Activated CD4-positive, alpha-beta memory T cell treated with anti-CD3 and anti-CD28 coated beads for 36 hours (primary cell): ENCODE measurements at regions of chr14 and their contacts with region 1.

Region 1: DNA sequence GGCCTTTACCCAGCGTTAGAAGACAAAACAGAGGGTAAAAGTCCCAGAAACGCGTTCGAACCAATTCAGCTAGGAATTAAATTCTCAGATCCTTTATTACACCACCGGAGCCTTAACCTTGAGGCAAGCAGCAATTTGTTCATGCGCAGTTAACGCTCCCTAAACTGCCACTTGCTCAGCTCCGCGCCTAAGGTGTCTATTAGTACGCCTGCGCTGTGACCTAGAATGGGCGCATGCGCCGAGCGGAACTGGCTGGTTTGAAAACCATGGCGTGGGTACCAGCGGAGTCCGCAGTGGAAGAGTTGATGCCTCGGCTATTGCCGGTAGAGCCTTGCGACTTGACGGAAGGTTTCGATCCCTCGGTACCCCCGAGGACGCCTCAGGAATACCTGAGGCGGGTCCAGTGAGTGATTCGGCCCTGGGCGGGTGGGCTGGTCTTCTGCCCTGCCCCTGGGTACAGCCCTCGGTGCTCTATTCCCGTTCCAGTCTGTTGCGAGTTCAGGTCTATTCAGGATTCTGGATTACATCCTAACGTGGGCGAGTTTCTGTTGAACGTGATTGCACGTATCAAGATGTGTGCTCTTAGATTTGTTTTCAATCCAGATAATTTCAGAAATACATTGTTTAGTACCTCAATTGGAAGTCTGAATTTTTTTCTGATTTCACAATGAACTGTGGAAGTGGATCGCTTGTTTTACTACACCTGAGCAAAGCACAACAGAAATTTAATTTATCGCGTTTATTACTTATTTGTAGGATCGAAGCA is at the start of gene GEMIN2:
- DNase-seq: peak; percentile 97
- H3K4me3 Mint-ChIP-seq: peak within 1 kb of the TSS; percentile 97
- H3K27ac Mint-ChIP-seq: peak within 1 kb of the TSS; percentile 93
- H3K4me1 Mint-ChIP-seq: peaks cover 18% of the 10 kb centered on the region
- H3K27me3 Mint-ChIP-seq: no peaks in the 10 kb centered on the region
- total RNA-seq, gene GEMIN2: 17.2 to 18.8 TPM

Region 2: GRCh38 chr14:38958594-38958993 is 155.7 kb before region 1 on chr14:
- CTCF ChIA-PET with region 1: no interaction called
- POLR2A ChIA-PET with region 1: no interaction called
- intact Hi-C with region 1: no loop called
- DNase-seq: no peak
- H3K4me3 Mint-ChIP-seq: no peak overlapping the region
- H3K27ac Mint-ChIP-seq: no peak overlapping the region
- H3K4me1 Mint-ChIP-seq: no peaks in the 10 kb centered on the region
- H3K27me3 Mint-ChIP-seq: peaks cover 2% of the 10 kb centered on the region

Region 3: DNA sequence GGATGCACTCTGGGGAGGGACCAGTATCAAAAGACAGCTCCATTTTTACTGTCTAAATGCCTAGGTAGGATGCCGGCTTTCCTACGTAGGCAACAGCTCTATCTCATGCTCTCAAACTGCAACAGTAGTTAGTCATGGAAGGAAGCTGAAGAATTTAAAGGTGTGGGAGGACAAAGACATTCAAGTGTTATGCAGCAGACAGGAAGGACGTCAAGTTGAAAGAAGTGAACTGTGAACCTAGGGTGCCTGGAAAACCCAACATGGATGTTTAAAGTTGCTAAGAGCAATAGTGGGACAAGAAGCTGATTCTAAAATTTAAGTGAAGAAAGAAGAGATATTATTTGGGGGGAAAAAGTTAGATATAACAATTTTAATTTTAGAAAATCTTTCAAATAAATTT is 17.1 kb before region 1 on chr14:
- CTCF ChIA-PET with region 1: interaction called, 12 read pairs
- POLR2A ChIA-PET with region 1: interaction called, 38 read pairs
- intact Hi-C with region 1: loop called (anchors 2 kb)
- DNase-seq: peak; percentile 38
- H3K4me3 Mint-ChIP-seq: no peak overlapping the region
- H3K27ac Mint-ChIP-seq: peak overlapping the region; percentile 69
- H3K4me1 Mint-ChIP-seq: peaks cover 41% of the 10 kb centered on the region
- H3K27me3 Mint-ChIP-seq: no peaks in the 10 kb centered on the region

Region 4: DNA sequence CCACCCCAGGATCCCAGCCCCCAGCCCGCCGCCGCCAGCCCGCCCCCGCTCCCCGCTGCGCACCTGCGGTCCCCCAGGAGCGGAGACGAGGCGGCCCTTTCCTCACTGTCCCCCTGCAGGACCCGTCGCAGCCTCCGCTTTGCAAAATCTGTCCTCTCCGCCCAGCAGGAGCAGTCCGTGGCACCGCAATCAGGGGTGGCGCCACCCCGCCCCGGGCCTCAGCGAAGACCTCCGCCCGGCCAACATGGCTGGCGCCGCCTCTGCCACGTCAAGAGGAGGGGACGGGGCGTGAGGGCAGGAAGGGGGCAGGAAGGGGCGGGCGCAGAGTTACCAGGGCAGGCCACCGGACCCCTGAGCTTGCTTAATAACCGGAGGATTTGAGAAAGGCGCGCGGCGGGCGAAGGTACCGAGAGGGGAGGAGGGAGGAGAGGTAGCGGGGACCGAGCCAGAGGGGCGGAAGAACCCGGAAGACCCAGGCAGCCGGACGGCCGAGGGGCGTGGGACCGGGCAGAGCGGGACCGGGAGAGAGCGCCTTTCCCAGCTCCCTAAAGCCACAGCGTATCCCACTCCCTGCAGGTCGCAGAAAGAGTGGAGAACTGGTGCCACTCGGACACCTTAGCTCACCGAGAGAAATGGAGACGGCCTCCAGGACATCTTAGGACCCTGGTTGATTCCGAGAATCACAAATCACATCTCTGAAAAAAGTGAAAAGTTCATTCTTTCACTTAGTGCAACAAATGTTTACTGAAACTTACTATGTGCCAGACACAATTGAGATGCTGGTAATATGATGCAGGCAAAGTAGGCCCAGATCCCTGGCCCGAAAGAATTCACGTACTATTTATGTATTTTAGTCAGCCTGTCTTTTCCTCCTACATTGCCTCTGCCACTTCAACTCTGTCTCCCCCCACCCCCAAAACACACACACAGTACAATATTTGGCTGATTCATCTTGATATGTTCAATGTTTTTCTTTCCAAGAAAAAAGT is 11.0 kb before region 1 on chr14 and contains the start of gene SEC23A:
- CTCF ChIA-PET with region 1: interaction called, 12 read pairs
- POLR2A ChIA-PET with region 1: interaction called, 38 read pairs
- intact Hi-C with region 1: loop called (anchors 1 kb)
- DNase-seq: peak; percentile 90
- H3K4me3 Mint-ChIP-seq: peak within 1 kb of the TSS; percentile 96
- H3K27ac Mint-ChIP-seq: peak within 1 kb of the TSS; percentile 96
- H3K4me1 Mint-ChIP-seq: peaks cover 42% of the 10 kb centered on the region
- H3K27me3 Mint-ChIP-seq: no peaks in the 10 kb centered on the region
- total RNA-seq, gene SEC23A: 52.4 to 54.9 TPM

Region 5: GRCh38 chr14:39169541-39169900 is 55.3 kb after region 1 on chr14:
- CTCF ChIA-PET with region 1: interaction called, 5 read pairs
- POLR2A ChIA-PET with region 1: interaction called, 12 read pairs
- intact Hi-C with region 1: loop called (anchors 1 kb)
- DNase-seq: no peak
- H3K4me3 Mint-ChIP-seq: peak overlapping the region; percentile 85
- H3K27ac Mint-ChIP-seq: peak overlapping the region; percentile 96
- H3K4me1 Mint-ChIP-seq: peaks cover 37% of the 10 kb centered on the region
- H3K27me3 Mint-ChIP-seq: no peaks in the 10 kb centered on the region

Region 6: GRCh38 chr14:39174560-39175444 is 60.5 kb after region 1 on chr14 and contains the start of gene PNN:
- CTCF ChIA-PET with region 1: interaction called, 5 read pairs
- POLR2A ChIA-PET with region 1: interaction called, 12 read pairs
- intact Hi-C with region 1: loop called (anchors 1 kb)
- DNase-seq: peak; percentile 98
- H3K4me3 Mint-ChIP-seq: peak within 1 kb of the TSS; percentile 89
- H3K27ac Mint-ChIP-seq: peak within 1 kb of the TSS; percentile 95
- H3K4me1 Mint-ChIP-seq: peaks cover 32% of the 10 kb centered on the region
- H3K27me3 Mint-ChIP-seq: no peaks in the 10 kb centered on the region
- total RNA-seq, gene PNN: 85.3 to 88.8 TPM

Region 7: GRCh38 chr14:39266871-39267591 is 152.8 kb after region 1 on chr14:
- CTCF ChIA-PET with region 1: no interaction called
- POLR2A ChIA-PET with region 1: interaction called, 4 read pairs
- intact Hi-C with region 1: loop called (anchors 1 kb)
- DNase-seq: peak; percentile 79
- H3K4me3 Mint-ChIP-seq: peak overlapping the region; percentile 84
- H3K27ac Mint-ChIP-seq: peak overlapping the region; percentile 90
- H3K4me1 Mint-ChIP-seq: peaks cover 46% of the 10 kb centered on the region
- H3K27me3 Mint-ChIP-seq: no peaks in the 10 kb centered on the region